Activated CD4-positive, alpha-beta T cell treated with anti-CD3 and anti-CD28 coated beads, Interleukin-2, amount 10 ng/mL, durations not matched to agents 24 days and 14 days (primary cell): ENCODE measurements at regions of chr20 and their contacts with region 1.

Region 1: GRCh38 chr20:50189681-50190582 is 698 bp upstream of the CEBPB start:
- DNase-seq: peak; percentile 96
- H3K4me3 Mint-ChIP-seq: peak overlapping the region; percentile 55
- H3K27ac Mint-ChIP-seq: peak overlapping the region; percentile 41
- H3K4me1 Mint-ChIP-seq: peaks cover 30% of the 10 kb centered on the region
- H3K27me3 Mint-ChIP-seq: peaks cover 11% of the 10 kb centered on the region

Region 2: DNA sequence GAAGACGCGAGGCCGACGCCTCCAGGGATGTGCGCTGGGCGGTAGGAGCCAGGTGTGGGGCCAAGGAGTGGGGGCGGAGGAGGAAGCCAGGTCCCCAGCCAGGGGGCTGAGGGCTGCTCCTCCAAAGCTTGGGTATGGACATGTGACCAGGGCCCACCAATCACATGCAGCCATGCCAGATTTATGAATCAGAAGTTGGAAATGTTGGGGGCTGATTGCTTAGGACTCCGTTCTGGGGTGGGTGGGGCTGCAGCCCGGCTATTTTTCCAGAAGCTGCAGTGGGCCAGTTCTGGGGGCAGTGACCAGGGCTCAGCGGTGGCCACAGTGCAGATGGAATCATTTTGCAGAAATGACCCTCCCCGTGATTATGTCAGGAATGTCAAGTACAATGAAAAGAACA is 96.7 kb after region 1 on chr20:
- intact Hi-C with region 1: loop called (anchors 10 kb)
- DNase-seq: no peak
- H3K4me3 Mint-ChIP-seq: no peak overlapping the region
- H3K27ac Mint-ChIP-seq: peak overlapping the region; percentile 93
- H3K4me1 Mint-ChIP-seq: peaks cover 29% of the 10 kb centered on the region
- H3K27me3 Mint-ChIP-seq: peaks cover 3% of the 10 kb centered on the region

Region 3: GRCh38 chr20:50380641-50381040 is 190.7 kb after region 1 on chr20:
- intact Hi-C with region 1: loop called (anchors 5 kb)
- DNase-seq: no peak
- H3K4me3 Mint-ChIP-seq: no peak overlapping the region
- H3K27ac Mint-ChIP-seq: no peak overlapping the region
- H3K4me1 Mint-ChIP-seq: peaks cover 49% of the 10 kb centered on the region
- H3K27me3 Mint-ChIP-seq: no peaks in the 10 kb centered on the region

Region 4: DNA sequence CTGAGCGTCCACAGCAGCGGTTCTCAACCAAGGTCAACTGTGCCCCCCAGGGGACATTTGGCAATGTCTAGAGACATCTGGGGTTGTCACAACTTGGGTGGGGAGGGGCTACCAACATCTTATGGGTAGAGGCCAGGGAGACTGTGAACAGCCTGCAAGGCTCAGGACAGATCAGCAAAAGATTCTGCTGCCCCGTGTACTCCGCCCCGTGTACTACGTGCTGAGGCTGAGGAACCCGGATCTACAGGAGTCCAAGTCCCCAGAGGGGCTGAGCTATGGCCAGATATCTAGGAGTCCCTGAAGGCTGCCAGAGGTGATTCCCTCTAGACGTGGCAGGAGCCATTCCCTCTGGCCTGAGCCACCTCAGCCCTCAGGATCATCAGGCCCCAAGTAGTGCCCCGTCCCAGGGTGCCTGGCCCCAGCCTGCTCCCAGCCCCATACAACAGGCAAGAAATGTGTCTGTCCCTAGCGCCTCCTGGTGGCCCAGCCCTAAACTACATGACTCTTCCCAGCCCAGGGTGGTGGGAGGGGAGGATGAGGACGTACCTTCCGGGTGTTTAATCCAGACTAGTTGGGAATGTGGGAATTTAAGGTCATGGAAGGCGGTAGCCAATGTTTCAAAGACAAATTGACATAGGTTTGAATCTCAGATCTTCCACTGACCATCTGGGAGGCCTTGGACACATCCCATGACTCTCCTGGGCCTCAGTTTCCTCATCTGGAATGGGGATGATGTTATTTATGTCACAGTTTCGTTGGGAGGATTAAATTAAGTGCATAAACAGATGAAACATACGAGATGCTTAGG is 270.7 kb after region 1 on chr20:
- intact Hi-C with region 1: loop called (anchors 1 kb)
- DNase-seq: peak; percentile 95
- H3K4me3 Mint-ChIP-seq: no peak overlapping the region
- H3K27ac Mint-ChIP-seq: no peak overlapping the region
- H3K4me1 Mint-ChIP-seq: peaks cover 24% of the 10 kb centered on the region
- H3K27me3 Mint-ChIP-seq: peaks cover 6% of the 10 kb centered on the region